A673 (cell line): ENCODE measurements at regions of chr1 and their contacts with region 1.

Region 1: DNA sequence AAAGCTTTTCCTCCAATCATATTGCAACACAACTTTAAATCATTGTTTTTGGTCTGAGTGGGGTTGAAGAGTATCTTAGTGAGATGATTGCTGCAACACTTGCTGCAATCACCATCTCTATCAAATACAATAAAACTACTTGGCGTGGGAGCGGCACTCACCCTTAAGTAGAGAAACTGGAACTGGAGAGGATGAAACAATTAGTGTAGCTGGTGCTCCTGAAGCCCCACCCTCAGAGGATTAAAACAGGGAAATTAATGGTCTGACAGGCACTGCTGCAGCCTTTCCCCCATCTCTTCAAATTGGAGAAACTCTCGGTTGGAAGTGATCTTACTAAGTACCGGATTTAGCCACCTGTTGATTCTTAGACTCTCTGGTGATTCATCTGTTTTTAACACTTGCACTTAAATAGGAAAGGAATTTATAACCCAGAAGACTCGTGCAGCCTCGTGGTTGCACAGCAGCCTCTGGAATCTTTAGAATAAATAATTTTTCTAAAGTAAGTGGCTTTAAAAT is 80.5 kb upstream of the KIF26B start:
- DNase-seq: peak; percentile 78
- H3K4me3 ChIP-seq: no peak overlapping the region
- H3K27ac ChIP-seq: no peak overlapping the region
- H3K4me1 ChIP-seq: peaks cover 13% of the 10 kb centered on the region
- H3K27me3 ChIP-seq: peaks cover 11% of the 10 kb centered on the region
- CTCF ChIP-seq: no peak

Region 2: GRCh38 chr1:245084551-245084950 is 10.3 kb after region 1 on chr1:
- CTCF ChIA-PET with region 1: interaction called, 14 read pairs
- POLR2A ChIA-PET with region 1: interaction called, 3 read pairs
- intact Hi-C with region 1: no loop called
- DNase-seq: no peak
- H3K4me3 ChIP-seq: no peak overlapping the region
- H3K27ac ChIP-seq: no peak overlapping the region
- H3K4me1 ChIP-seq: no peaks in the 10 kb centered on the region
- H3K27me3 ChIP-seq: peaks cover 2% of the 10 kb centered on the region
- CTCF ChIP-seq: no peak